Activated naive CD4-positive, alpha-beta T cell treated with anti-CD3 and anti-CD28 coated beads for 36 hours (primary cell): ENCODE measurements at regions of chr17 and their contacts with region 1.

Region 1: DNA sequence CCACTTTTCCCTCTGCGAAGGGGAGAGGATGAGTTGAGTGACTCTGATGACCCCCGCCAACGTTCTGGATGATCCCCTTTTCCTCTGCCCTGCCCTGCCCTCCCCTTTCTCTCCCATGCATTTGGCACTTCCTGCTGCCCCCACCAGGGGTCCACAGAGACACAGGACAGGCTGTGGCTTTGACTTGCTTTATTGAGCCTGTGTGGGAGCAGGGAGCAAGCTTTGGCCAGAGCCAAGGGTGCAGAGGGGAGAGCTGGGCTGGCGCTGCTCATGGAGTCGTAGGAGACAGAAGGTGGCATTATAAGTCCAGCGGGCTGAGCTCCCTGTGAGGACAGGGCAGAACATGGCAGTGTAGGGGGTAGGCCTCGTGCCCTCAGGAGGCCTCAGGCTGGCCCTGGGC is 1.6 kb downstream of the PPY start:
- DNase-seq: peak; percentile 46
- H3K4me3 Mint-ChIP-seq: no peak overlapping the region
- H3K27ac Mint-ChIP-seq: no peak overlapping the region
- H3K4me1 Mint-ChIP-seq: peaks cover 20% of the 10 kb centered on the region
- H3K27me3 Mint-ChIP-seq: peaks cover 2% of the 10 kb centered on the region

Region 2: GRCh38 chr17:43878260-43879175 is 62.1 kb before region 1 on chr17:
- CTCF ChIA-PET with region 1: interaction called, 13 read pairs
- intact Hi-C with region 1: loop called (anchors 2 kb)
- DNase-seq: peak; percentile 75
- H3K4me3 Mint-ChIP-seq: no peak overlapping the region
- H3K27ac Mint-ChIP-seq: no peak overlapping the region
- H3K4me1 Mint-ChIP-seq: no peaks in the 10 kb centered on the region
- H3K27me3 Mint-ChIP-seq: no peaks in the 10 kb centered on the region

Region 3: DNA sequence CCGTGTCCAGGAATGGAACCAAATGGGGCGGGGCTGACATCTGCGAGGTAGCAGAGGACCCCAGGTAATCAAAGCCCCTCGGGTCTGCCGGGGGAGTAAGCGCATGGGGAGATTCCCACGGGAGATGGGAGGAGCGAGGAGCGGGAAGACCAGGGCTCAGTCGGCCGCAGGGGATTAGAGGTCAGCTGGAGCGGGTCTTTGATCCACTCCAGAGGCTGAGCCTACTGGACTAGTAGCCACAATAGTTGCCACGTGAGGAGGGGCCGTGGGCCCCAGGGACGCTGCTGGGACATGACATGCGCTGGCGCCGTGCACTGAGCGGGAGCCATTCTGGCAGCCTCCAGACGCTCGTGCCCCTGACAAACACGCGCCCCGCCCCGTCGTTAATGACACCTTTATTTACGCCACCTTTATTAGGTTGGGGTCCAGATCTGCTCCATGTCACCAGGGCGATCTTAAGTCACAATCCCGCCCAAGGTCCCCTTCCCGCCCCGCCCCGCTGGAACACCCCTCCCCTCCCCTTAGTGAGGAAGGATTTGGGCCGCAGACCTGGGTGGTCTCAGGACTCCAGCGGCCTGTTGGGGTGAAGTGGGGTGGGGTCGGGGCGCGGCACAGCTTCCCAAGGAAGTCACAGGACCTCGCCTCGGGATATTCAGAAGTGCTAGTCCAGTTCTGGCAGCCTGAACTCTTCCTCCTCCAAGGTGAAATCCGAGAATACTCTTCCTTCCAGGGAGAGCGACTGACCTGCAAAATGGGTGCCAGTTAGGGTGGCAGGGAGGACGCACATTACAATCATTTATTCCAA is 13.4 kb before region 1 on chr17:
- CTCF ChIA-PET with region 1: interaction called, 20 read pairs
- intact Hi-C with region 1: no loop called
- DNase-seq: peak; percentile 44
- H3K4me3 Mint-ChIP-seq: peak overlapping the region; percentile 71
- H3K27ac Mint-ChIP-seq: peak overlapping the region; percentile 10
- H3K4me1 Mint-ChIP-seq: peaks cover 23% of the 10 kb centered on the region
- H3K27me3 Mint-ChIP-seq: no peaks in the 10 kb centered on the region

Region 4: GRCh38 chr17:43962479-43962878 is 21.8 kb after region 1 on chr17:
- CTCF ChIA-PET with region 1: interaction called, 14 read pairs
- intact Hi-C with region 1: no loop called
- DNase-seq: no peak
- H3K4me3 Mint-ChIP-seq: no peak overlapping the region
- H3K27ac Mint-ChIP-seq: no peak overlapping the region
- H3K4me1 Mint-ChIP-seq: no peaks in the 10 kb centered on the region
- H3K27me3 Mint-ChIP-seq: no peaks in the 10 kb centered on the region

Region 5: DNA sequence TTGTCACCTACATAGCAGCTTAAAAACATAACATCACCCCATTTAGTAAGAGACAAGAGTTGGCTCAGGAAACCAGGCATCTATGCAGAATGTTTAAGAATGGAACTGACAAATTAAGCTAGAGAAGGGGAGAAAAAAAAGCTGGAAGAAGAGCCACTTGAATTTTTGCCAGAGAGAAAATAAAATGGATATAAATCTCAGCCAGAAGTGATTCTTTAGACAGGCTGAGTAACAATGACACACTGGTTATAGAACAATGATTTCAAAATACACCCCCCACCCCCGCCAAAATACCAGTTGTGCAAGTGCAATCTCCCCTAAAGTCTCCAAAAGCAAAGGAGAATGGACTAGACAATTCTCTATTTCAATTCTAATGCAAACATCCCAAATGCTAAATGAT is 103.4 kb after region 1 on chr17:
- CTCF ChIA-PET with region 1: interaction called, 26 read pairs
- intact Hi-C with region 1: loop called (anchors 1 kb)
- DNase-seq: no peak
- H3K4me3 Mint-ChIP-seq: no peak overlapping the region
- H3K27ac Mint-ChIP-seq: no peak overlapping the region
- H3K4me1 Mint-ChIP-seq: peaks cover 11% of the 10 kb centered on the region
- H3K27me3 Mint-ChIP-seq: no peaks in the 10 kb centered on the region

Region 6: DNA sequence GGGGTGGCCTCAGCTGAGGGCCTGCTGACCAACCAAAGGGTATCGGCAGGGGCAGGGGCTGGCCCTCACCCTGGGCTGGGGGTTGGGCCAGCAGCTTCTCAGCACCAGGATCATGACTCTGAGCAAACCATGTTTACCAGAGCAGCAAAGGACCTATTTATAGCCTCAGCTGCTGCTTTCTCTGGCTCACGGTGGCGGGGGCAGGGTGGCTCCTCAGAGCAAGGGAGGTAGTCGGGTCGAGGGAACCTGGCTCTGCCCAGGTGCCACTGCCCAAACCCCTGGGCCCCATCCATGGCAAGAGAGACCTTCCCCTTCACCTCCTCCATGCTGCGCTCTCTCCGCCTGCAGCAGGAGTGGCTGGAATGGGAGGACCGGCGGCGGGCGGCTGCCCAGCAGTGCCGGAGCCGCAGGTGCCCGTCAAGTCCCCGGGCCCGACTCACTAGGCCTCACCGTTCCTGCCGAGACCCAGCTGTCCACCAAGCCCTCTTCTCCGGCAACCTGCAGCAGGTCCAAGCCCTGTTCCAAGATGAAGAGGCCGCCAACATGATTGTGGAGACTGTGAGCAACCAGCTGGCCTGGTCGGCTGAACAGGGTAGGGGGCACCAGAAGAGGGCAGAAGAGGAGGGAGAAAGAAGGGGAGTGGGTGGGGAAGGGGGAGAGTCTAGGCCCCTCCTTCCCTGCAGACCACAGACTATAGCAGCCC is 230.0 kb after region 1 on chr17 and contains the start of gene ASB16:
- CTCF ChIA-PET with region 1: interaction called, 12 read pairs
- intact Hi-C with region 1: loop called (anchors 1 kb)
- DNase-seq: no peak
- H3K4me3 Mint-ChIP-seq: no peak within 1 kb of the TSS
- H3K27ac Mint-ChIP-seq: no peak within 1 kb of the TSS
- H3K4me1 Mint-ChIP-seq: peaks cover 6% of the 10 kb centered on the region
- H3K27me3 Mint-ChIP-seq: no peaks in the 10 kb centered on the region
- total RNA-seq, gene ASB16: 0.12 TPM in 1 of 2 experiments, not detected in the other